ENCODE measurements at regions of chr13 and their contacts with region 1.

Region 1: GRCh38 chr13:110225609-110226562 is 81.1 kb downstream of the COL4A1 start:
- DNase-seq: no peak
- H3K4me3 ChIP-seq: no peak overlapping the region
- H3K27ac ChIP-seq: peak overlapping the region; percentile 85 to 97 (median 89)
- H3K4me1 ChIP-seq: peaks cover 0 to 72% (median 55%) of the 10 kb centered on the region in 4 donors
- H3K27me3 ChIP-seq: no peaks in the 10 kb centered on the region
- CTCF ChIP-seq: no peak
- EP300 ChIP-seq: no peak
- POLR2A ChIP-seq: no peak

Region 2: GRCh38 chr13:110396913-110397381 is 171.1 kb after region 1 on chr13:
- intact Hi-C with region 1: no loop called
- DNase-seq: peak; percentile 99
- H3K4me3 ChIP-seq: peak overlapping the region in 3 of 4 donors; percentile 9 to 24 (median 24)
- H3K27ac ChIP-seq: peak overlapping the region; percentile 90 to 96 (median 93)
- H3K4me1 ChIP-seq: peaks cover 0 to 84% (median 79%) of the 10 kb centered on the region in 4 donors
- H3K27me3 ChIP-seq: no peaks in the 10 kb centered on the region
- CTCF ChIP-seq: no peak
- EP300 ChIP-seq: peak; percentile 94 to 100 (median 94)
- POLR2A ChIP-seq: peak in 1 of 2 donors; percentile 14

Region 3: DNA sequence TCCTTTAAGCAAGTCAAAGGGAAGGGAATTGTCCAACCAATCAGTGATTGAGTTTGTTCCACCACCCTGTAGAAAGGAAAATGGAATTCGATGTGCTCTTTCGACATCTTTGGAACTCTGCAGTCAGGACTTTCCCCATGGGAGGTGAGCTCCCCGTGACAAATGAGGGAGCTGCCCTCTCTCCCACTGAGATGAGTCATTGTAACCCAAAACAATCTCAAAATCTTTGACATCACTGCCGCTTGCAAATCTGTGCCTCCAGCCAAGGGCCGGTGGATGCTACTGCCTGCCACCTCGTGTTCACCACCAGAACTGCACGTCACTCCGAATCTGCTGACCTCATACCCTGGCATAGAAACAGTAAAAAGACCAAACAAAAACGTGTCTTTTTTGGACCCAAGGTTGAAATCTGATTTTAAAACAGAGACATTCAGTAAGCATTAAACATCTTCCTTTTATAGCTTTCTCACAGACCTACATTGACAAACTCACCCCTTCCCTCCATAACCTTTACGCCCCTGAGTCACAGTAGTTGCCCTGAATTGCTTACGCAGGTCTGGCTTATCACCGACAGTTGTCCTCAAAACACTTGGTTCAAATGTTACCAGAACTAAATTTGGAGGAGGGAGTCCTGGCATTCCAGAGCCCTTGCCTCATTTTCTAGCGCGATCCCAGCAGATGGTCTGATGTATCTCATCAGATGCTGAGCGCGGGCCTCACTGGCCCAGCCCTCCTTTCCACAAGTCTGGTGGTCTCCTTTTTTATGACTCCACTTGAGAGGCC is 186.4 kb after region 1 on chr13:
- intact Hi-C with region 1: loop called (anchors 1 kb)
- DNase-seq: peak; percentile 98
- H3K4me3 ChIP-seq: no peak overlapping the region
- H3K27ac ChIP-seq: peak overlapping the region; percentile 87 to 98 (median 90)
- H3K4me1 ChIP-seq: peaks cover 2 to 93% (median 90%) of the 10 kb centered on the region in 4 donors
- H3K27me3 ChIP-seq: no peaks in the 10 kb centered on the region
- CTCF ChIP-seq: peak; percentile 76 to 96 (median 89)
- EP300 ChIP-seq: peak; percentile 78 to 99 (median 86)
- POLR2A ChIP-seq: no peak

Region 4: DNA sequence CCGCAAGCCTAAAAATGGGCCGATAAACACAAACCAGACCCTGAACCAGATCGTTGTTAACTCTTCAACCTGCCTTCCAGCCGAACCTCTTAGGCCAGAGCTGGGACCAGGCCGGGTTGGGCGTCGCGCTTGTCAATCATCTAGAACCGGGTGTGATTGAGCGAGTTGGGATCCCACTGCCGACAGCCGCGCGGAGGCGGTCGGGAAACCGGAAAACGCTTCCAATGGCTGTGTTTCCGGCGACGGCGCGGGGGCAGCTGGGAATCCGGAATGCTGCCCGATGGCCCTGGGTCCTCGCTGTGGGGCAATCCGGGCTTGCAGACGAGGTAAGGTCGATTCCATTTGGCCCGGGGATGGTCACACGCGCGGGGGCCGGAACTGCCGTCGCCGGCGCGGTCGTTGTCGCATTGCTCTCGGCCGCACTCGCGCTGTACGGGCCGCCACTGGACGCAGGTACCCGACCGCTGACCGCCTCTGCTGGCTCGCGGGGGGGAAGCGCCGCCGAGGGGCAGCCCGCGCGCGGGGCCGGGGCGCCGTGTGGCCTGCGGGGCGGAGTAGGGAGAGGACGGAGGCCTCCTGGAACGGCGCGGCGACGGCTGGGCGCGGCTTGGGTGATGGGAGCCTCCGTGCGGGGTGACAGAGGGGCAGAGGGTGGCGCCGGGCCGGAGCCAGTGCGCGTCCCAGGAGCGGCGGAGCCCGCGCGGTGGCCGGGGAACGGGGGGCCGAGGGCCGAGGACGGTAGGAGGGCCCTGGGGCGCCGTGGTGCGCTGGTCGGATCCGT is 389.6 kb after region 1 on chr13 and contains the start of gene NAXD:
- intact Hi-C with region 1: loop called (anchors 10 kb)
- DNase-seq: peak; percentile 97
- H3K4me3 ChIP-seq: peak within 1 kb of the TSS; percentile 80 to 93 (median 81)
- H3K27ac ChIP-seq: peak within 1 kb of the TSS; percentile 94 to 97 (median 96)
- H3K4me1 ChIP-seq: peaks cover 0 to 50% (median 46%) of the 10 kb centered on the region in 4 donors
- H3K27me3 ChIP-seq: no peaks in the 10 kb centered on the region
- CTCF ChIP-seq: no peak
- EP300 ChIP-seq: peak in 1 of 4 donors; percentile 82
- POLR2A ChIP-seq: peak; percentile 35 to 50
- total RNA-seq, gene NAXD: 33.5 to 41.1 (median 37.2) TPM